ENCODE measurements at regions of chr3 and their contacts with region 1.

Region 1: GRCh38 chr3:49673715-49674496 is at the start of gene APEH:
- DNase-seq: peak; percentile 94 to 99 (median 98)
- ATAC-seq: peak; percentile 93
- H3K4me3 ChIP-seq: peak within 1 kb of the TSS; percentile 79
- H3K4me3 Mint-ChIP-seq: peak within 1 kb of the TSS; percentile 90 to 97 (median 94)
- H3K27ac ChIP-seq: peak within 1 kb of the TSS; percentile 94
- H3K27ac Mint-ChIP-seq: peak within 1 kb of the TSS; percentile 93 to 99 (median 96)
- H3K4me1 ChIP-seq: peaks cover 16 to 31% of the 10 kb centered on the region in 2 donors
- H3K4me1 Mint-ChIP-seq: peaks cover 15 to 57% (median 38%) of the 10 kb centered on the region in 7 donors
- H3K27me3 ChIP-seq: no peaks in the 10 kb centered on the region
- H3K27me3 Mint-ChIP-seq: no peaks in the 10 kb centered on the region
- total RNA-seq, gene APEH: 75.5 to 151 (median 99.1) TPM

Region 2: GRCh38 chr3:48784426-48785120 is 889.3 kb before region 1 on chr3:
- CTCF ChIA-PET with region 1: no interaction called
- POLR2A ChIA-PET with region 1: no interaction called
- intact Hi-C with region 1: no loop called
- DNase-seq: no peak
- ATAC-seq: no peak
- H3K4me3 ChIP-seq: no peak overlapping the region
- H3K4me3 Mint-ChIP-seq: no peak overlapping the region
- H3K27ac ChIP-seq: no peak overlapping the region
- H3K27ac Mint-ChIP-seq: peak overlapping the region in 2 of 9 donors; percentile 12 to 16
- H3K4me1 ChIP-seq: peaks cover 6 to 12% of the 10 kb centered on the region in 2 donors
- H3K4me1 Mint-ChIP-seq: peaks cover 9 to 16% (median 15%) of the 10 kb centered on the region in 7 donors
- H3K27me3 ChIP-seq: no peaks in the 10 kb centered on the region
- H3K27me3 Mint-ChIP-seq: no peaks in the 10 kb centered on the region

Region 3: DNA sequence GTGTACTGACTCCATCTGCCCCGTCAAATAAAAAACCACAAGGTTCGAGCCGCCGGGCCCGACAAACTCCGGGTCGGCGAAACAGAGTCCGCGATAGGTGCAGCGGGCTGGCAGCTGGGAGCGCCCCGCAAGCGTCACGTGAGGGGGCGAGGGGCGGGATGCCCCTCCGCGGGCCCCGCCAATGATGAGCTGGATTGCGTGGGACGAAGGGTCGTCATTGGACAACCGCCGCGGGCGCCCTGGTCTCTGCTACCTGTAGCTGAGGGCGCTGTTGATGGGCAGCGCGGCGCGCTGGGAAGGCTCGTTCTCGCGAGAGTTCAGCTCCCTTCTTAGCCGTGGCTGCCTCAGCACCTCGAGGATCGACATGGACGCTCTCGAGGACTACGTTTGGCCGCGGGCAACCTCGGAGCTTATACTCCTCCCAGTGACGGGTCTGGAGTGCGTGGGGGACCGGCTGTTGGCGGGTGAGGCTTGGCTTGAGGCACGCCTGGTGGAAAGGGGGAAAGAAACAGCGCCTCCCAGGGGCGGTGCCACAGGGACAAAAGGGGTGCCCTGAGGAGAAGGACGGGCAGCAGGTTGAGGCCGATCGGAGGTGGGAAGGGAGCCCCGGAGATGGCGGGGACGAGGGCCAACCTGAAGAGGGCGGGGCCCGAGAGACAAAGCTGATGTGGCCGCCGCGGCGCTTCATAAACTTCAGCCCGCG is 666.7 kb before region 1 on chr3 and contains the start of gene WDR6:
- CTCF ChIA-PET with region 1: no interaction called
- POLR2A ChIA-PET with region 1: no interaction called
- intact Hi-C with region 1: loop called in 1 of 2 experiments (anchors 2 kb)
- DNase-seq: peak; percentile 86 to 98 (median 96)
- ATAC-seq: peak; percentile 95
- H3K4me3 ChIP-seq: peak within 1 kb of the TSS; percentile 96
- H3K4me3 Mint-ChIP-seq: peak within 1 kb of the TSS; percentile 94 to 100 (median 98)
- H3K27ac ChIP-seq: peak within 1 kb of the TSS; percentile 90
- H3K27ac Mint-ChIP-seq: peak within 1 kb of the TSS; percentile 95 to 100 (median 98)
- H3K4me1 ChIP-seq: peaks cover 8 to 16% of the 10 kb centered on the region in 2 donors
- H3K4me1 Mint-ChIP-seq: peaks cover 14 to 34% (median 28%) of the 10 kb centered on the region in 7 donors
- H3K27me3 ChIP-seq: no peaks in the 10 kb centered on the region
- H3K27me3 Mint-ChIP-seq: no peaks in the 10 kb centered on the region
- total RNA-seq, gene WDR6: 170 to 335 (median 204) TPM

Region 4: GRCh38 chr3:49339945-49340800 is 333.7 kb before region 1 on chr3 and contains the start of gene USP4:
- CTCF ChIA-PET with region 1: no interaction called
- POLR2A ChIA-PET with region 1: no interaction called
- intact Hi-C with region 1: loop called (anchors 1 kb)
- DNase-seq: peak; percentile 78 to 93 (median 91)
- ATAC-seq: peak; percentile 91
- H3K4me3 ChIP-seq: peak within 1 kb of the TSS; percentile 89
- H3K4me3 Mint-ChIP-seq: peak within 1 kb of the TSS; percentile 81 to 96 (median 86)
- H3K27ac ChIP-seq: peak within 1 kb of the TSS; percentile 95
- H3K27ac Mint-ChIP-seq: peak within 1 kb of the TSS; percentile 95 to 99 (median 98)
- H3K4me1 ChIP-seq: peaks cover 23 to 30% of the 10 kb centered on the region in 2 donors
- H3K4me1 Mint-ChIP-seq: peaks cover 32 to 61% (median 47%) of the 10 kb centered on the region in 7 donors
- H3K27me3 ChIP-seq: no peaks in the 10 kb centered on the region
- H3K27me3 Mint-ChIP-seq: no peaks in the 10 kb centered on the region
- total RNA-seq, gene USP4: 98.3 to 135 (median 109) TPM

Region 5: DNA sequence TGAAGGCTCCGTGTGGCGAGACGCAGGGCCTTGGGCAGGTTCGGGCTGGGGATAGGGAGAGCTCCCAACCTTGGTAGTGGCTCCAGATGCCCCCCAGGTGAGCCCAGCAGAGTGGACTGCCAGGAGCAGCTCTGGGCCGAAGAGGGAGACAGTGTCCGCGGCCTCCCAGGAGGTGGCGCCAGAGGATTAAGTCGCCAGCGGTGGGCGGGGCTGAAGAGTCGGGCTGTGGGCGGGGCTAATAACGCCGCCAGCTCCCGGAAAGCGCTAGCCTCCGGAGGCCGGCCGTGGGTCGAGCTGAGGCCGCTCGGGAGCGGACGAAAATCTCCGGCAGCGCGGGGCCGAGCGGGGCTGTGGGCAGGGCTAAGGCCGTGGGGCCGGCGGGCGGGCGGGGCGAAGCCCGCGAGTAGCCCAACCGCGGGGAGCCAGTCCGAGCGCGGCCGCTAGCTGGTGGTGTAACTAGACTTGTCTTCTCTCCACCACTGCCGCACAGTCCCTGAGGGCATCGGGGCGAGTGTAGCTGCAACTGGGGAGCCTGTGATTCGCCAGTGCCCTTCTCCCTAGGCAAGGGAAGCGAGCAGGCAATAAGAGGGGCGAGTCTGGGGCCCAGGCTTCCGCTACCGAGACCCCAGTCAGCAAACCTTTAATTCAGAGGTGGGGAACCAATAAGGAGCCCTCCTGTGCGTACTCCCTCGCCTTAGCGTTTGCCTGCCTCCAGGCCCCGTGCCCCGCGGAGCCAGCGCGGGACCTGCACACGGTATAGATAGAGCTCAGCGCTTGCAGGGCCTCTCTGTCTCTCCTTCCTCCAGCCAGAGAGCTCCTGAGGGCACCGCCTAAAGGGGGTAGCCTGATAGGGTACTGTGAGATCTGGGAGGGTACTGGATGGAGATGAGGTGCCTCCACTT is 134.0 kb before region 1 on chr3:
- CTCF ChIA-PET with region 1: interaction called, 111 read pairs
- POLR2A ChIA-PET with region 1: interaction called, 45 read pairs
- intact Hi-C with region 1: loop called (anchors 1 kb)
- DNase-seq: peak; percentile 77 to 97 (median 85)
- ATAC-seq: peak; percentile 99
- H3K4me3 ChIP-seq: peak overlapping the region; percentile 90
- H3K4me3 Mint-ChIP-seq: peak overlapping the region; percentile 75 to 84 (median 80)
- H3K27ac ChIP-seq: peak overlapping the region; percentile 78
- H3K27ac Mint-ChIP-seq: peak overlapping the region in 6 of 9 donors; percentile 14 to 69 (median 33)
- H3K4me1 ChIP-seq: peaks cover 4 to 5% of the 10 kb centered on the region in 2 donors
- H3K4me1 Mint-ChIP-seq: peaks cover 0 to 9% (median 5%) of the 10 kb centered on the region in 7 donors
- H3K27me3 ChIP-seq: no peaks in the 10 kb centered on the region
- H3K27me3 Mint-ChIP-seq: peaks cover 0 to 24% (median 4%) of the 10 kb centered on the region in 5 donors

Region 6: GRCh38 chr3:49689046-49689907 is 15.4 kb after region 1 on chr3 and contains the starts of genes MST1 and RNF123:
- CTCF ChIA-PET with region 1: no interaction called
- POLR2A ChIA-PET with region 1: interaction called, 5 read pairs
- intact Hi-C with region 1: loop called (anchors 1 kb)
- DNase-seq: peak; percentile 89 to 96 (median 93)
- ATAC-seq: peak; percentile 91
- H3K4me3 ChIP-seq: peak within 1 kb of the TSS; percentile 97
- H3K4me3 Mint-ChIP-seq: peak within 1 kb of the TSS; percentile 84 to 99 (median 96)
- H3K27ac ChIP-seq: peak within 1 kb of the TSS; percentile 82
- H3K27ac Mint-ChIP-seq: peak within 1 kb of the TSS; percentile 87 to 99 (median 95)
- H3K4me1 ChIP-seq: peaks cover 6 to 13% of the 10 kb centered on the region in 2 donors
- H3K4me1 Mint-ChIP-seq: peaks cover 20 to 54% (median 41%) of the 10 kb centered on the region in 7 donors
- H3K27me3 ChIP-seq: no peaks in the 10 kb centered on the region
- H3K27me3 Mint-ChIP-seq: peaks cover 0 to 5% (median 0%) of the 10 kb centered on the region in 5 donors
- total RNA-seq, gene MST1: 7.9 to 12.8 (median 10.0) TPM
- total RNA-seq, gene RNF123: 34.5 to 77.2 (median 50.7) TPM

Region 7: DNA sequence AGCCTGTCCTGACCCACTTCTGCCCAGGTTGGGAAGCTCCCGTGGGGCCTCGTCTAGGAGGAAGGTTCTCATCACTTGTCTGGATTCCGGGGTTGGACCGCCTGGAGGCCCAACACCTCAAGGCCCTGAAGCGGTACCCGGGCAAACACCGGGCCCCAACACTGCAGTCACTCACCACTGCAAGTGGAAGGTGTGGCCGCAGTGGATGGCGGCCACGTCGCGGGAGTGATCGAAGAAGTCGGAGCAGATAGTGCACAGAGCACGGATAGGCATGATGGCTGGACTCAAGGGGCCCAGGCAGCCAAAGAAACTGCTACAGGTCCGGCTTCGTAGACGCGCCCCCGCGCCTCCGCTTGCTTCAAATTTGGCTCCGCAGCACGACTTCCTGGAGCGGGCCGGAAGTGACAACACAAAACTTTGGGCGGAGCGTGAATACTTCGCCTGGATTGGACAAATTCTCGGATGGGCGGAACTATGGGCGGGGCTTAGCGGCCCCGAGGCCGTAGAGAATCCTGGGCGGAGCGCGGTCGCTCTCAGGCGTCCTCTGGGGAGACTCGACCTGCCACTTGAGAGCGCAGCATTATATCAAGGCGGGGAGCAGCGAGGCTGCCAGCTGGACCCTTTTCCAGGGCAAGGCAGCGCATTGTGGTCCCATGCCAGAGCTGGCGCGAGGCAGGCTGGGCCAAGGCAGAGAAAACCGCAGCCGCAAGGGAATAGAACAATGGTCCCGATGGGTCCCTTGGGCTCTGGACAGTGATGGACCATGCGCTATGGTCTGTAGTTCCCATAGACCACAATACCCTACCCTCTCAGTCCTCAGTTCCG is 182.5 kb after region 1 on chr3 and contains the start of gene TRAIP:
- CTCF ChIA-PET with region 1: no interaction called
- POLR2A ChIA-PET with region 1: interaction called, 3 read pairs
- intact Hi-C with region 1: loop called (anchors 1 kb)
- DNase-seq: peak; percentile 89 to 96 (median 93)
- ATAC-seq: peak; percentile 100
- H3K4me3 ChIP-seq: peak within 1 kb of the TSS; percentile 75
- H3K4me3 Mint-ChIP-seq: peak within 1 kb of the TSS; percentile 80 to 94 (median 88)
- H3K27ac ChIP-seq: peak within 1 kb of the TSS; percentile 71
- H3K27ac Mint-ChIP-seq: peak within 1 kb of the TSS; percentile 70 to 95 (median 92)
- H3K4me1 ChIP-seq: peaks cover 10 to 11% of the 10 kb centered on the region in 2 donors
- H3K4me1 Mint-ChIP-seq: peaks cover 4 to 19% (median 13%) of the 10 kb centered on the region in 7 donors
- H3K27me3 ChIP-seq: no peaks in the 10 kb centered on the region
- H3K27me3 Mint-ChIP-seq: no peaks in the 10 kb centered on the region
- total RNA-seq, gene TRAIP: 4.1 to 22.5 (median 5.7) TPM

Region 8: GRCh38 chr3:50298836-50299637 is 625.1 kb after region 1 on chr3 and contains the starts of genes HYAL3 and NAA80:
- CTCF ChIA-PET with region 1: no interaction called
- POLR2A ChIA-PET with region 1: no interaction called
- intact Hi-C with region 1: loop called in 1 of 2 experiments (anchors 5 kb)
- DNase-seq: peak; percentile 94 to 100 (median 99)
- ATAC-seq: peak; percentile 93
- H3K4me3 ChIP-seq: peak within 1 kb of the TSS; percentile 97
- H3K4me3 Mint-ChIP-seq: peak within 1 kb of the TSS; percentile 84 to 99 (median 97)
- H3K27ac ChIP-seq: peak within 1 kb of the TSS; percentile 86
- H3K27ac Mint-ChIP-seq: peak within 1 kb of the TSS; percentile 90 to 100 (median 99)
- H3K4me1 ChIP-seq: peaks cover 19 to 20% of the 10 kb centered on the region in 2 donors
- H3K4me1 Mint-ChIP-seq: peaks cover 12 to 36% (median 22%) of the 10 kb centered on the region in 7 donors
- H3K27me3 ChIP-seq: no peaks in the 10 kb centered on the region
- H3K27me3 Mint-ChIP-seq: no peaks in the 10 kb centered on the region
- total RNA-seq, gene HYAL3: 3.4 to 10.7 (median 4.2) TPM
- total RNA-seq, gene NAA80: 30.2 to 44.9 (median 33.6) TPM